ENCODE measurements at regions of chr15 and their contacts with region 1.

Region 1: DNA sequence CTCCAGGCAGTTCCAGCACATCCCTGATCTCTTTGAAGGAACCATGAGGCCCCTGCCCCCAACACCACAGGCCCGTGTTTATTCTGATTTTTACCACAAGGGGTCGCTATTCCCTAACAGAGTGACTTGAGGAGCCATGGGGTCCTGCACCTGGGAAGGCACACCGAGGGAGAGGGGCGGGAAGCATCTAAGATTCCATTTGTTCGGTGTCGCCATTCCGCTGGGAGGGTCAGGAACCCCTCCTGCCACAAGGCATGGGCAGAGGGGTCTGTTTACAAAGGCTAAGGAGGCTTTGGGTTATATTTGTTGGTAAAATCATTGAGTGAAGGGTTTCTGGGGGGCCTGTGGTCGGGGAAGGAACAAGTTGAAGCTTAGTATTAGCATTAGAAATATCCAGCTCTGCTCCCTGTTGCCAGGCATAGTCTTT is 77.1 kb downstream of the WDR76 start:
- DNase-seq: peak; percentile 24
- ATAC-seq: peak; percentile 69
- H3K4me3 Mint-ChIP-seq: no peak overlapping the region
- H3K27ac Mint-ChIP-seq: no peak overlapping the region
- H3K4me1 Mint-ChIP-seq: peaks cover 6% of the 10 kb centered on the region
- H3K27me3 Mint-ChIP-seq: no peaks in the 10 kb centered on the region
- CTCF ChIP-seq: no peak

Region 2: GRCh38 chr15:44066316-44066740 is 162.5 kb after region 1 on chr15:
- CTCF ChIA-PET with region 1: interaction called, 46 read pairs
- POLR2A ChIA-PET with region 1: interaction called, 5 read pairs
- intact Hi-C with region 1: loop called (anchors 1 kb)
- DNase-seq: peak; percentile 17
- ATAC-seq: peak; percentile 52
- H3K4me3 Mint-ChIP-seq: no peak overlapping the region
- H3K27ac Mint-ChIP-seq: no peak overlapping the region
- H3K4me1 Mint-ChIP-seq: peaks cover 1% of the 10 kb centered on the region
- H3K27me3 Mint-ChIP-seq: peaks cover 4% of the 10 kb centered on the region
- CTCF ChIP-seq: peak; percentile 30

Region 3: DNA sequence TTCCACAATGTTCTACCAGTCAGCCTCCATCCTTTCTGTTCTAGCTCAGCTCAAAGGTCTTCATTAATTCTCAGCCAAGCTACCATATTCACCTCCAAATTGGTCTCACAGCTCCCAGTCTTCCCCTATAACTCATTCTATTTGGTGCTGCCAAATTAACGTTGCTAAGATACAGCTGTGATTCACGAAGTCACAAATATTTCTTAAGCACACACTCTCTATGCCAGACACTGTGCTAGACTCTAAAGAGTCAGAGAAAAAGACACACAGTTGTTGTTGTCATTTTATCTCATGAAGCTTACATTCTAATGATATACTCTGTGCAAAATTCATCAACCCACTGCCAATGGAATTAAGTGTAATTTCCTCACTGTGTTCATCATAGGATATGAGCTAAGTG is 188.3 kb after region 1 on chr15:
- CTCF ChIA-PET with region 1: no interaction called
- POLR2A ChIA-PET with region 1: no interaction called
- intact Hi-C with region 1: no loop called
- DNase-seq: no peak
- ATAC-seq: no peak
- H3K4me3 Mint-ChIP-seq: no peak overlapping the region
- H3K27ac Mint-ChIP-seq: no peak overlapping the region
- H3K4me1 Mint-ChIP-seq: no peaks in the 10 kb centered on the region
- H3K27me3 Mint-ChIP-seq: peaks cover 11% of the 10 kb centered on the region
- CTCF ChIP-seq: no peak

Region 4: GRCh38 chr15:44219073-44219472 is 315.2 kb after region 1 on chr15:
- CTCF ChIA-PET with region 1: no interaction called
- POLR2A ChIA-PET with region 1: no interaction called
- intact Hi-C with region 1: loop called (anchors 1 kb)
- DNase-seq: no peak
- ATAC-seq: no peak
- H3K4me3 Mint-ChIP-seq: no peak overlapping the region
- H3K27ac Mint-ChIP-seq: no peak overlapping the region
- H3K4me1 Mint-ChIP-seq: peaks cover 2% of the 10 kb centered on the region
- H3K27me3 Mint-ChIP-seq: peaks cover 15% of the 10 kb centered on the region
- CTCF ChIP-seq: no peak